ENCODE measurements at regions of chr17 and their contacts with region 1.

Region 1: GRCh38 chr17:38667099-38667786 is 7.5 kb downstream of the EPOP start:
- DNase-seq: peak; percentile 44 to 60
- ATAC-seq: peak; percentile 25 to 76 (median 69)
- H3K4me3 ChIP-seq: no peak overlapping the region
- H3K27ac ChIP-seq: no peak overlapping the region
- H3K4me1 ChIP-seq: no peaks in the 10 kb centered on the region
- H3K27me3 ChIP-seq: peaks cover 0 to 67% (median 32%) of the 10 kb centered on the region in 7 donors
- CTCF ChIP-seq: peak; percentile 92 to 100 (median 98)

Region 2: DNA sequence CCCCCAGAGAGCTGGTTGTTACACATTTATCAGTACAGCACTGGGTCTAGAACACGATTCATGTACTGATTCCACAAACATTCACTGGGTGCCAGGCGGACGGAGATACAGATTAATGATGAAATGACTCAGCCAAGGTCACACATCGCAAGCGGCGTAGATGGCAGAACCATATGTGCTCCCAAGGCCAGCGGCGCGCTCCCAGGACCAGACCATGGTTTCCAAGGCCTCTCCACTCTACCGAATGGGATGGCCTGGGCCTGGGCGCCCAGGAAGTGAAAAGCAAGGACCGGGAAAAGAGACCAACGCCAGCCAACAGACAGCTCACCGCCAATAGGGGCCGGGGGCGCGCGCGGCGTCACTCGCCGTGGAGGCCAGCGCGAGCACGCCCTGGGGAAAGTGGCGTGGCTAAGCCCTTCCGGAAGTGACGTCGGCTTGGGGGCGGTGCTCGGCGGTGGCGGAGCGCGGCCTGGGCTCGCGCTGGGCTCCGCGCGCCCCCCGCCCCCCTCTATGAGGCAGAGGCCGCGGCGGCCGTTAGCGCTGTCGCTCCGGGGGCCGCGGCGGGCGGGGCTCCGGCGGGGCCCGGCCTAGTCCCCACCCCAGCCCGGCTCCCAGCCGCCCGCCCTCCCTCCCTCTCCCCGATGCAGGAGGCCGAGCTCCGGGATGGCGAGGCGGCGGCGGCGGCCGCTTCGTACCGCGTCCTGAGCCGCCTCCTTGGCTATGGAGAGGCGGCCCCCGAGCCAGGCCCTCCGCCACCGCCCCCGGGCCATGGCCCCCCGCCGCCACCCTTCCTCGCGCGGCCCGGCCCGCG is 315.6 kb before region 1 on chr17 and contains the start of gene SOCS7:
- intact Hi-C with region 1: loop called in 1 of 10 experiments (anchors 10 kb)
- DNase-seq: peak; percentile 95 to 97
- ATAC-seq: peak; percentile 96 to 98 (median 97)
- H3K4me3 ChIP-seq: peak within 1 kb of the TSS; percentile 78 to 96 (median 94)
- H3K27ac ChIP-seq: peak within 1 kb of the TSS; percentile 52 to 93 (median 87)
- H3K4me1 ChIP-seq: peaks cover 5 to 49% (median 37%) of the 10 kb centered on the region in 9 donors
- H3K27me3 ChIP-seq: no peaks in the 10 kb centered on the region
- CTCF ChIP-seq: no peak
- total RNA-seq, gene SOCS7: 11.2 to 23.8 (median 16.3) TPM

Region 3: DNA sequence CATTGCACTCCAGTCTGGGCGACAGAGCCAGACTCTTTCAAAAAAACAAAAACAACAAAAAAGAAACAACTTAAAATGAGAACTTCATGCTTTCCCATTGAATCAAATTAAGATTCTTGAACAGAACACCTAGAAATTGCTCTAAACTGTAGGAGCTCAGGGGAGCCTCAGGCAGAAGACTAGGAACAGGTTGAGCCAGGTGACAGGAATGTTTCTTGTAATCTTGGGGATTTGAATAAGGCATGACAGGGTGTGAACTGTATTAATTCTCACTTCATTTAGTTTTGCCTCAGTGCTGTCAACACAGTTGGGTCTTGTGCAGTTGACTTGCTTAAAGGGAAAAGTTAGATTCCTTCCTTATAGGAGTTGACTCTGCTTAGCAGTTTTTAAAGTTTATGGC is 287.8 kb before region 1 on chr17:
- intact Hi-C with region 1: no loop called
- DNase-seq: no peak
- ATAC-seq: no peak
- H3K4me3 ChIP-seq: no peak overlapping the region
- H3K27ac ChIP-seq: no peak overlapping the region
- H3K4me1 ChIP-seq: no peaks in the 10 kb centered on the region
- H3K27me3 ChIP-seq: no peaks in the 10 kb centered on the region
- CTCF ChIP-seq: no peak

Region 4: DNA sequence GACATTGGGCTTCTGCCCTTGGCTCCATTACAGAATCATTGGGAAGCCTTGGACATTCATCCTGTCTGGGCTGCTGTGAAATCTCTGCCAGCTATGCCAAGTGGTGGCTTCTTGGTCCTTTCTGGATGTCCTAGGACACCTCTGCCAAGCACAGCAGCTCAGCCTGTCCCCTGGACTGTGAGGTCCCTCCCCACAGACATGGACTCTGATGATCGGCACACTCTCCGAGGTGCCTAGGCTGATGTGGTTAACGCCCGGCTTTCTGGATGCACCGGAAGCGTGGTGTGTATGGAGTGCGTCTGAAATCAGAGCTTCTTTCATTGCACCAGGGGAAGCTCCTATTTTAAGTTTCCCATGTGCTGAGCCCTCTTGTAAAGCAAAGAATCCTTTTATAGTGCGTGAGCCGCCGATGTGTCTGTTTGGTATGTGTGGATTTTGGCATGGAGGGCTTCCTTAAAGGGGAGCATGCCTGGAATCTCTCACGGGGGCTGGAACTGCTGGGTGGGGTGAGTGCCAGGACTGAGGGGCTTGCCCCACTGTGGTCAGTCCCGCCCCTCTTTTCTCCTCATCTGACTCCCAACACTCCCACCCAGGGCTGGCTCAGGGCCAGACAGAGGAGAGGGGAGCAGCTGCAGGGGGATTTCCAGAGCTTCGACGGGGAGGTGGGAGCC is 245.9 kb before region 1 on chr17:
- intact Hi-C with region 1: loop called in 7 of 10 experiments (anchors 5 to 10 kb)
- DNase-seq: no peak
- ATAC-seq: peak in 6 of 8 donors; percentile 7 to 50 (median 19)
- H3K4me3 ChIP-seq: peak overlapping the region in 1 of 10 donors; percentile 10
- H3K27ac ChIP-seq: peak overlapping the region in 7 of 10 donors; percentile 15 to 90 (median 71)
- H3K4me1 ChIP-seq: peaks cover 10 to 63% (median 48%) of the 10 kb centered on the region in 9 donors
- H3K27me3 ChIP-seq: peaks cover 0 to 56% (median 23%) of the 10 kb centered on the region in 7 donors
- CTCF ChIP-seq: no peak

Region 5: DNA sequence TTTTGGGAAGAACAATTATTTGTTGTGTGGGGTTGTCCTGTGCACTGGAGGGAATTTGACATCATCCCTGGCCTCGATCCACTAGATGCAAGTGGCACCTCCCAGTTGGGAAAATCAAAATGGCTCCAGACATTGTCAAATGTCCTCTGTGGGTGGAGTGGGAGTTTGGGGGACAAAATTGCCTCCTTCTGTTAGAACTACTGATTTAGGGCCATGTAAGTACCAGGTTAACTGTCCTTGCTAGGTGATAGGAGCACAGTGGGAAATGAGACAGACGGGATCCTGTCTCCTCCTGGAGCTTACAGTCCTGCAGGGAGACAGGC is 182.1 kb before region 1 on chr17:
- intact Hi-C with region 1: loop called in 7 of 10 experiments (anchors 5 kb)
- DNase-seq: no peak
- ATAC-seq: no peak
- H3K4me3 ChIP-seq: no peak overlapping the region
- H3K27ac ChIP-seq: peak overlapping the region in 8 of 10 donors; percentile 2 to 84 (median 27)
- H3K4me1 ChIP-seq: peaks cover 0 to 40% (median 19%) of the 10 kb centered on the region in 9 donors
- H3K27me3 ChIP-seq: no peaks in the 10 kb centered on the region
- CTCF ChIP-seq: peak in 2 of 9 donors; percentile 1 to 12

Region 6: DNA sequence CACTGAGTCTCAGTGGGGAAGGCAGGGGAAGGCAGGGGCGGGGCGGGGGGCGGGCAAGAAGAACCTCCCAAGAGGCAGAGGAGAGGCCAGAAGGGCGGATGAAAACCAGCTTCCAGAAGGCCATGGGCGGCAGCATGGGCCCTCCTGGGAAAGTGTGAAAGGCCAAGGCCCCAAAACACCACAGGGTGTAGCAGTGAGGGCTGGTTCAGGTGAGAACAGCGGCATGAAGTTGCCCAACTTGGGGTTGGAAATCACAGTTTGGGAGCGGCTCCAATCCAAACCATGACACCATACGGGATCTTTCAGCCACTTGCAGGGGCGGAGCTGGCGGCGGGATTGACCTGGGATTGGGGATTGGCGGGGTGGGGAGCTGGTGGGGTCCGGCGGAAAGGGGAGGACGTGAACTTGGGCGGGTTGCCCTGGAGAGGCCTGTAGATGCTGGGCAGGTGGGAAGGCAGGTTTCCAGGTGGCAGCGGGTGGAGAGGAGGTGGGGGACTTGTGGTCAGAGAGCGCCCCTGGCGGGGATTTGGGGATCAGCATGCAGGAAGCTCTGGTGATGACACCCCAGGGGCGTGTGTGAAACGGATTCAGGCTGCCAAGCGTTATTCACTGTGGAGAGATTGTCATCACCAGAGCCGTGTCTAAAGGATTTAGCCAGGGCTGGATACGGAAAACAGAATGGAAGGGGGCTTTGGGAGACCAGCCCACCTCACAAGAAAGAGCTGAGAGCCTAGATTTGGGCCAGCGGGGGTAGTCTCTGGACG is 158.1 kb before region 1 on chr17:
- intact Hi-C with region 1: loop called in 1 of 10 experiments (anchors 5 kb)
- DNase-seq: peak; percentile 72 to 75
- ATAC-seq: peak; percentile 52 to 82 (median 68)
- H3K4me3 ChIP-seq: peak overlapping the region in 6 of 10 donors; percentile 7 to 24 (median 20)
- H3K27ac ChIP-seq: peak overlapping the region in 4 of 10 donors; percentile 14 to 56 (median 19)
- H3K4me1 ChIP-seq: peaks cover 0 to 17% (median 12%) of the 10 kb centered on the region in 9 donors
- H3K27me3 ChIP-seq: peaks cover 0 to 36% (median 0%) of the 10 kb centered on the region in 7 donors
- CTCF ChIP-seq: peak; percentile 31 to 74 (median 68)

Region 7: GRCh38 chr17:38584350-38584925 is 82.8 kb before region 1 on chr17:
- intact Hi-C with region 1: loop called in 2 of 10 experiments (anchors 5 to 10 kb)
- DNase-seq: peak in 1 of 2 donors; percentile 53
- ATAC-seq: peak; percentile 67 to 88 (median 78)
- H3K4me3 ChIP-seq: no peak overlapping the region
- H3K27ac ChIP-seq: no peak overlapping the region
- H3K4me1 ChIP-seq: peaks cover 0 to 11% (median 4%) of the 10 kb centered on the region in 9 donors
- H3K27me3 ChIP-seq: peaks cover 0 to 99% (median 63%) of the 10 kb centered on the region in 7 donors
- CTCF ChIP-seq: peak; percentile 69 to 97 (median 92)

Region 8: GRCh38 chr17:39026980-39027451 is 359.8 kb after region 1 on chr17:
- intact Hi-C with region 1: no loop called
- DNase-seq: peak; percentile 73 to 82
- ATAC-seq: peak; percentile 79 to 95 (median 93)
- H3K4me3 ChIP-seq: peak overlapping the region; percentile 35 to 66 (median 51)
- H3K27ac ChIP-seq: peak overlapping the region in 7 of 10 donors; percentile 15 to 74 (median 67)
- H3K4me1 ChIP-seq: peaks cover 0 to 20% (median 6%) of the 10 kb centered on the region in 9 donors
- H3K27me3 ChIP-seq: peaks cover 0 to 20% (median 0%) of the 10 kb centered on the region in 7 donors
- CTCF ChIP-seq: peak in 1 of 9 donors; percentile 13

Measured in heart right ventricle (tissue), 16 donors.